ENCODE measurements at regions of chr1 and their contacts with region 1.

Region 1: DNA sequence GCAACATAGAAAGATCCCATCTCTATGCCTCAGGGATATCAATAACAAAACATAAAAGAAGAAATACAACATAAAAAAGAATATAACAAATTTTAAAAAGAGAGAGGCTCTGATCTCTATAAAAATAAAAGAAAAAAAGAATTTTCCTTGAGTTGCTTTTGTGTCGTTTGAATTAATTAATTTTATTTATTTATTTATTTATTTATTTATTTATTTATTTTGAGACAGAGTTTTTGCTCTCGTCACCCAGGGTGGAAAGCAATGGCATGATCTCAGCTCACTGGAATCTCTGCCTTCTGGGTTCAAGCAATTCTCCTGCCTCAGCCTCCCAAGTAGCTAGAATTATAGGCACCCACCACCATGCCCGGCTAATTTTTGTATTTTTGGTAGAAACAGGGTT is 8.5 kb downstream of the F11R start:
- DNase-seq: no peak
- H3K4me3 ChIP-seq: no peak overlapping the region
- H3K27ac ChIP-seq: no peak overlapping the region
- H3K4me1 ChIP-seq: no peaks in the 10 kb centered on the region
- H3K27me3 ChIP-seq: no peaks in the 10 kb centered on the region
- CTCF ChIP-seq: no peak

Region 2: GRCh38 chr1:161033751-161034150 is 21.3 kb after region 1 on chr1:
- CTCF ChIA-PET with region 1: no interaction called
- POLR2A ChIA-PET with region 1: interaction called, 21 read pairs
- intact Hi-C with region 1: no loop called
- DNase-seq: no peak
- H3K4me3 ChIP-seq: no peak overlapping the region
- H3K27ac ChIP-seq: no peak overlapping the region
- H3K4me1 ChIP-seq: no peaks in the 10 kb centered on the region
- H3K27me3 ChIP-seq: no peaks in the 10 kb centered on the region
- CTCF ChIP-seq: no peak

Region 3: DNA sequence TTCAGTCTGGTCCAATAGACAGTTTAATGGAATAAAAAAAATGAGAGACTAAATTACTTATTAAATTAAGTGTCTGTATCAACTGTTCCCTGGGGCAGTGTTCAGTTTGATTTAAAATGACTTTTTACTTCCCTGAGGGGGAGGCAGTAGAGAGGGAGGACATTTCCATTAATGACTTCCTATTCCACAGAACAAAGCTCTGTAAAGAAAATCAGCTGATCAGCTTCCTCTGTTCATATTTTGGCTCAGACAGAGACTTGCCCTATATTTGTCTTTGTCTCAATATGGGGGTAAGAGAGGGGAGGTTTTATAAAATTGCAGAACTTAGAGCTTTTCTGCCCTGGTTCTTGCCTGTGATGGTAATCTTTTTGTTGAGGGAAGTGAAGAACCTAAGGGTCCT is 346.9 kb after region 1 on chr1:
- CTCF ChIA-PET with region 1: no interaction called
- POLR2A ChIA-PET with region 1: no interaction called
- intact Hi-C with region 1: no loop called
- DNase-seq: peak; percentile 34
- H3K4me3 ChIP-seq: no peak overlapping the region
- H3K27ac ChIP-seq: peak overlapping the region; percentile 6
- H3K4me1 ChIP-seq: no peaks in the 10 kb centered on the region
- H3K27me3 ChIP-seq: no peaks in the 10 kb centered on the region
- CTCF ChIP-seq: no peak

Measured in A673 (cell line).